BJ (cell line): ENCODE measurements at regions of chr14 and their contacts with region 1.

Region 1: DNA sequence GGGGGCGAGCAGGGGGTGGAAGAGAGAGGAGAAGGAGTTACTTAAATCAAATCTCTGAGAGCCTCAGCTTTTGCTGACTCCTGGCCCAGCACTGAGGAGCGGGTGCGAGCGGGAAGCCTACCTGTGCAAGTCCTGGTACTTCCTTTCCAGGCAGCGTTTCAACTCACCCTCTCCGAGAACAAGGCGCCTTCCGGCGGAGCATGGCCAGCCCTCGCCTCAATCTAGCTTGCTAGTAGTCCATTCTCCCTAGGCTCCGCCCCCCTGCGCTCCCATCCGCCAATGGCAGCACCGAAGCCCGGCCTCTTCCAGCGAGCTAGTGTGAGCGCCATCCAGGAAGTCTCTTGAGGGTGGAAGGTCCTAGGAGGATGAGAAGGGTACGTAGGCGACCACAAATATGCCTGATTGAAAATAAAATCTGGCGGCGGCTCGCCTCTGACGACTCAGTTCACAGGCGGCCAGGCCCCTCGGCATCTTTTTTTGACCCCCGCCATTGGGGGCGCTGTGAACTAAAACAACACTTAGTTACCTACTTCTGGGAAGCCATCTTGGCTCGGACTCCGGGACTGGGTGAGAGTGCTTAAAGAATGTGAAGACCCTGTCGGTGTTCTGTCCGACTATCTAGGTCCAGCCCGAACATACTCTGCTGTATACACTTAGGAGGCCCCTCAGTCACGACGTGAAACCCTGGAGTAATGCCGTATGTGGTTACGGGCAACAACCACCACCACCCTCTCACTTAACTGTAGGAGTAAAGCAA is at the start of gene CHD8:
- DNase-seq: peak; percentile 99
- H3K4me3 ChIP-seq: peak within 1 kb of the TSS; percentile 75
- H3K27me3 ChIP-seq: no peaks in the 10 kb centered on the region
- CTCF ChIP-seq: peak; percentile 70
- polyA plus RNA-seq, gene CHD8: 16.8 and 25.4 TPM in 2 replicates

Region 2: DNA sequence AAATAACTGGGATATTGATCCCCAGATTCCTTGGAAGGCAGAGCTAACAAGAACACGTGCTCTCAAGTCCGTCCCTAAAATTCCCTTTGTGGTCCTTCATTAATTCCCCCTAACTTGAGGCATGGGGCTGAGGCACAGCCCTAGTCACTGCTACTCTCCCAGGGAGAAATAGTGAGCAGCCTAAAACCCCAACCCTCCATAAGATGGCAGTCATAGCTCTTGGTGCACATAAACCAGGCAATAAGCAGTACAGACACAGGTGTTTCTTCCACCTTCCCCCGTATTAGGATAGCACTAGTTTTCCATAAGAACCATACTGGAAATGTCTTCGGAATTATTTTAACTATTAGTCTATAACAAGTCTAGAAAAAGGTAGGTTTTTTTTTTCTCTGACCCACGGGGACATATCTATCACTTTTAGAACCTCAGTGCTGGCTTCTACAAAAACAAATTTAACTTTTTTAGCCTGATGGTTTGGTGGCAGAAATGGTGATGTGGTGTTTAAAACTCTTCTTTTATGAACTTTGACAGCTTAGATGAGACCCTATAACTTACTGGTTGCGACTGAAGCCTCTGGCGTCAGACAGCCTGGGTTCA is 389.1 kb before region 1 on chr14:
- CTCF ChIA-PET with region 1: no interaction called
- POLR2A ChIA-PET with region 1: no interaction called
- DNase-seq: no peak
- H3K4me3 ChIP-seq: no peak overlapping the region
- H3K27me3 ChIP-seq: no peaks in the 10 kb centered on the region
- CTCF ChIP-seq: peak; percentile 20; the same call in 1 of the 2 replicates

Region 3: GRCh38 chr14:21440859-21441258 is 15.2 kb before region 1 on chr14:
- CTCF ChIA-PET with region 1: interaction called, 14 read pairs
- POLR2A ChIA-PET with region 1: interaction called, 5 read pairs
- DNase-seq: no peak
- H3K4me3 ChIP-seq: no peak overlapping the region
- H3K27me3 ChIP-seq: no peaks in the 10 kb centered on the region
- CTCF ChIP-seq: no peak

Region 4: DNA sequence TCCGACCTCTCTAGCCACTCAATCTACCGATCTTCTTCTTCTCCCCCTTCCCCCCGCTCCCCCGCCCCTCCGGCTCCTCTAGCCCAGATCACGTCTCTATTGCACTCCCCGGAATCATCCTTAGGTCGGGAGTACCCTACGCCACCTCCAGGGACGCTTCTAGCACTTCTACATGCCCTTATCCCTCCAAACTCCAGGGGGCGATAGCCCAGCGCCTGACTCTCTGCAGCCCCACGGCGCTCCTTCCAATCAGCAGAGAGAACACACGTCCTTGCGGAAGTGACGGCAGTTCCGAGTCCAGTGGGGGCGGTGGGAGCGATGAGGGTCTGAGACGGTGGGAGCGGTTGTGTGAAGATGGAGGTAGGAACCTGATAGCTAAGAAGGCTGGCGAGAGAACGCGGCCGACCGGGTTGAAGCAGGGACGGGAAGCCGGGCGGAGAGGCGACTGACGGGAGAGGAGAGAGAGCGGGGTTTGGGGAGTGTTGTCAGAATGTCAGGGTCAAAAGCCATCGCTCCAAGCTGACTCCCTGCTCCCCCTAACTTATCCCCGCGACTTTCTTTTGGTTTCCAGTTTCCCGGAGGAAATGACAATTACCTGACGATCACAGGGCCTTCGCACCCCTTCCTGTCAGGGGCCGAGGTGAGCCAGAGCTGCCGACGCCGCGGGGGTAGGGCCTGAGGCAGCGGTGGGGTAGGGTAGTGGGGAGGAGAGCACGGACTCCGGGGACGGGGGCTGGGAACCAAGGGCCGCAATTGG is 21.0 kb after region 1 on chr14 and contains the starts of genes RAB2B and TOX4:
- CTCF ChIA-PET with region 1: interaction called, 12 read pairs
- POLR2A ChIA-PET with region 1: no interaction called
- DNase-seq: peak; percentile 95
- H3K4me3 ChIP-seq: peak within 1 kb of the TSS; percentile 94
- H3K27me3 ChIP-seq: no peaks in the 10 kb centered on the region
- CTCF ChIP-seq: peak; percentile 100
- polyA plus RNA-seq, gene RAB2B: 20.3 and 29.9 TPM in 2 replicates
- polyA plus RNA-seq, gene TOX4: 105 and 141 TPM in 2 replicates

Region 5: DNA sequence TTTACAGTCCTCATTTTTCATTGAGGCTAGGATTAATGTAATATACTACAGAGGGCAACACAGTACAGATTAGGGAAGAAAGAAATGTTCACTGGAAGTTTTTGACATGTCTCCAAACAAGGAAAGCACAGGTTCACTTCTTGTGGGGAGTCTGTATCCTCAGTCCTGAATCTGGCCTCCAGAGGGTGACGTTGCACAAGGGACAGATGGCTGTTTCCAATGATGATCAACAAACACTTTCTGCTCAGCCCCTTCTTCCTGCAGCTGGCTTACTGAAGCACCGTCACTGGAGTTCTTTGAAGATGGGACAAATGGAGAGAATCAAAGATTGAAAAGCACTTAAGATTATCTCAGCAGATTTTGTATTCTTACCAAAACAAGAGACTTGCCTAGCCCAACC is 340.8 kb after region 1 on chr14:
- CTCF ChIA-PET with region 1: no interaction called
- POLR2A ChIA-PET with region 1: no interaction called
- DNase-seq: no peak
- H3K4me3 ChIP-seq: no peak overlapping the region
- H3K27me3 ChIP-seq: no peaks in the 10 kb centered on the region
- CTCF ChIP-seq: no peak